ENCODE measurements at regions of chr17 and their contacts with region 1.

Region 1: DNA sequence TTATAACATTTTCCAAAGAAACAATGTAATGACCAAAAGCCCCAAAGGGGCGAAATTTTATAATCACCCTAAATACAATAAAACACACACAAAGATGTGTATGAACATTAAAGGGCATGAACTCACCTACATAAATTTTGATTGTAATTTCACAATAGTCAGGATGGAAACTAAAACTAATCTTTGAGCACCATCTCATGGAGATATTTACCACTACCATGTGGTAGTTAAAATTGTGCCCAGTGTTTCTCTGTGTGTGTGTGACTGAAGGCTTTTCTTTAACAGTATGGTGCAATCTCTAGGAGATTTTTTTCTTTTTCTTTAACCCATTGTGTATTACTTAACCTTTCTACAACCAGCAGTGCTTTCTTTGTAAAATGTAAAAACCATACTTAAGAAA is 19.7 kb upstream of the MEIOC start:
- DNase-seq: peak; percentile 51
- H3K27ac ChIP-seq: no peak overlapping the region
- CTCF ChIP-seq: peak; percentile 41; the same call in 1 of the 2 replicates

Region 2: GRCh38 chr17:44533533-44534246 is 102.9 kb before region 1 on chr17:
- CTCF ChIA-PET with region 1: interaction called, 33 read pairs
- POLR2A ChIA-PET with region 1: interaction called, 6 read pairs
- DNase-seq: peak; percentile 88
- H3K27ac ChIP-seq: peak overlapping the region; percentile 22; the same call in 1 of the 2 replicates
- CTCF ChIP-seq: peak; percentile 90

Region 3: GRCh38 chr17:44543213-44543904 is 93.2 kb before region 1 on chr17:
- CTCF ChIA-PET with region 1: interaction called, 10 read pairs
- POLR2A ChIA-PET with region 1: no interaction called
- DNase-seq: peak; percentile 91
- H3K27ac ChIP-seq: peak overlapping the region; percentile 61; the same call in 1 of the 2 replicates
- CTCF ChIP-seq: no peak

Region 4: GRCh38 chr17:44599298-44600175 is 37.0 kb before region 1 on chr17:
- CTCF ChIA-PET with region 1: no interaction called
- POLR2A ChIA-PET with region 1: no interaction called
- DNase-seq: peak; percentile 12
- H3K27ac ChIP-seq: no peak overlapping the region
- CTCF ChIP-seq: no peak

Region 5: GRCh38 chr17:44722254-44722653 is 85.7 kb after region 1 on chr17:
- CTCF ChIA-PET with region 1: no interaction called
- POLR2A ChIA-PET with region 1: no interaction called
- DNase-seq: no peak
- H3K27ac ChIP-seq: no peak overlapping the region
- CTCF ChIP-seq: no peak

Measured in RWPE1 (cell line).